ENCODE measurements at regions of chr14 and their contacts with region 1.

Region 1: DNA sequence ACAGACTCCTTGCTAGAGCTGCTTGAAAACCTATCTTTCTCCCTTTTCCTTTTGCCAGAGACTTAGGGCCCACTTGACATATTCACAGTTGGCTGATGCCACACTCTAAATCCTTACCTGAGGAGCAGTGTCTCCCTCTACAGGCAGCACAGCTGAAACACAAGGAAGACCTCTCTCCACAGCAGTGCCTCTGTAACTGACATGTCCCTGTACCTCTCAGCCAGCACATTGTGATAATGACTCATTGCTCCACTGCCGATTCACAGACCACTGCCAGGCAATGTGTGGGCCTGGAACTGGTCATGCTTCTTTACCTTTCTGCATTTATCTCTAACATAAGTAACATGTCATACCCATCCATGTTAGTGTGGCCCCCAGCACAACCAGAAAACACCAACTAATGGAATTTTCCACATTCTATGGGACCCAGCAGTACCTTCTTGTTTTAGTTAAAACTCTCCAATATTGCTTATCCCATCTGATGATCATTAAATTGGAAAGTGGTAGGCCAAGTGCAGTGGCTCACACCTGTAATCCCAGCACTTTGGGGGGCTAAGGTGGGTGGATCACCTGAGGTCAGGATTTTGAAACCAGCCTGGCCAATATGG is 56.5 kb downstream of the GTF2A1 start:
- DNase-seq: peak in 2 of 4 donors; percentile 50 to 61
- ATAC-seq: peak; percentile 99
- H3K4me3 ChIP-seq: no peak overlapping the region
- H3K27ac ChIP-seq: no peak overlapping the region
- H3K4me1 ChIP-seq: peaks cover 2 to 8% of the 10 kb centered on the region in 2 donors
- H3K27me3 ChIP-seq: no peaks in the 10 kb centered on the region
- CTCF ChIP-seq: peak; percentile 61 to 66

Region 2: DNA sequence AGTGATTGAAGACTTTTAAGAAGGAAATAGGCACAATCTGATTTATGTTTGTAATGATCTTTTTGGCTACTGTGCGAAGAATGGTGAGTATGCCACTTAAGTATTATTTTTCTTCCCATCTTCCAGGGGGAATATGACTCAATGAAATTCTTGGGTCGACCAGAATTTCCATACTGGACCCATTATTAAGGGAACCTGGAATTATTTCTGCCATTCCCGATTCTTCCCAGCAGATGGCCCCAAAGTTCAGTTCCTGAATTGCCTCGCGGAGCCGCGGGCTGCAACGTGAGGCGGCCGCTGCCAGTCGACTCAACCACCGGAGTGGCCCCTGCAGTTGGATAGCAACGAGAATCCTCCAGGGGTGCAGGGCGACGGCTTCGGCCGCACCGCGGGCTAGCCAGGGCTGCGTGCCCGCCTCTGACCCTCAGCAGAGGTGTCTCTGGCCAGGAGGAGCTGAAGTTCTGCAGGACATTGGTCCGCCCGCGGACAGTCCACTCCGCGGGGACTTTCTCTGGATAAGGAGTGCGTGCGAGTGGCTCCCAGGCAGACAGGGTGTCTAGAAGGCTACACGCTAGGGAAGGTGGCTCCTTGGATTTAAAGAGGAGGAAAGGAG is 209.5 kb before region 1 on chr14:
- intact Hi-C with region 1: loop called in 1 of 2 experiments (anchors 10 kb)
- DNase-seq: peak; percentile 62 to 94 (median 78)
- ATAC-seq: peak; percentile 98
- H3K4me3 ChIP-seq: peak overlapping the region; percentile 40 to 41
- H3K27ac ChIP-seq: no peak overlapping the region
- H3K4me1 ChIP-seq: peaks cover 5 to 11% of the 10 kb centered on the region in 2 donors
- H3K27me3 ChIP-seq: peaks cover 0 to 13% of the 10 kb centered on the region in 2 donors
- CTCF ChIP-seq: peak; percentile 59 to 77

Region 3: GRCh38 chr14:80996049-80996901 is 168.0 kb before region 1 on chr14:
- intact Hi-C with region 1: loop called in 1 of 2 experiments (anchors 5 kb)
- DNase-seq: peak in 2 of 4 donors; percentile 17 to 65
- ATAC-seq: peak; percentile 98
- H3K4me3 ChIP-seq: no peak overlapping the region
- H3K27ac ChIP-seq: no peak overlapping the region
- H3K4me1 ChIP-seq: peaks cover 0 to 10% of the 10 kb centered on the region in 2 donors
- H3K27me3 ChIP-seq: no peaks in the 10 kb centered on the region
- CTCF ChIP-seq: peak; percentile 51 to 57

Measured in left lung (tissue), 14 donors.